MCF 10A (cell line): ENCODE measurements at regions of chr7 and their contacts with region 1.

Region 1: DNA sequence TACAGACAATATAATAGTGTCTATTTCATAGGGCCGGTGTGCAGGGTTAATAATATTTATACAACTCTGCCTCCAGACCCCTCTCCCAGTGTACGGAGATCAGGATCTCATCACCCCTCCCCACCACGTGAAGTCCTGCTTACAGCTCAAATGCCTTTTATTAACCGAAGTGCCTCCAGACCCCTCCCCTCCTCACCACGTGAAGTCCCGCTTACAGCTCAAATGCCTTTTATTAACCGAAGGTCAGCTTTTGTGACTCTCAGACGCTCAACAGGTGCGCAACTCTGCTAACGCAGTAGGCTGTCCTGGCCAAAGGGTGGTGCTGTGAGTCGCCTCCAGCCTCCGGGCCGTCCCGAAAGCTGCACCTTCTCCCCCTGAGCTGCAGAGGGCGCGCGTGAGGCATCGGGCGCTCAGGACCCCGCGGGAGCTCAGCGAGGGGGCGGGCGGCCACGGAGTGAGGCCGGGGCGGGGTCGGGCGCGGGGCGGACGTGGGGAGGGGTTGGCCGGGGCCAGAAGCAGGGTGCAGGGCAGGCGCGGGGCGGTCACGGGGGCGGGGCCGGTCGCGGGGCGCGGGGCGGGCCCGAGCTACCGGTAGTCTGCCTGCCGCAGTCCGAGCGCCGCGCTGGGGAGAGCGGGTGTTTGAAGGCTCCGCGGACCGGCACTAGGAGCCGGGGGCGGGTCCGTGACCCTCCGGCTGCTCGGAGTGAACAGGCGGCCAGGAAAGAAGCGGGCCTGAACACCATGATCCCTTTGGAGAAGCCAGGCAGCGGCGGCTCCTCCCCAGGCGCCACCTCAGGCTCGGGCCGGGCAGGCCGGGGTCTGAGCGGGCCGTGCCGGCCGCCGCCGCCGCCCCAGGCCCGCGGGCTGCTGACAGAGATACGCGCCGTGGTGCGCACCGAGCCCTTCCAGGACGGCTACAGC is at the start of gene STK17A:
- DNase-seq: peak; percentile 94
- H3K4me3 Mint-ChIP-seq: peak within 1 kb of the TSS; percentile 93
- H3K27ac Mint-ChIP-seq: peak within 1 kb of the TSS; percentile 95
- H3K4me1 Mint-ChIP-seq: peaks cover 16% of the 10 kb centered on the region
- H3K27me3 Mint-ChIP-seq: no peaks in the 10 kb centered on the region
- CTCF ChIP-seq: peak; percentile 97
- total RNA-seq, gene STK17A: 27.2 and 51.6 TPM in 2 replicates

Region 2: DNA sequence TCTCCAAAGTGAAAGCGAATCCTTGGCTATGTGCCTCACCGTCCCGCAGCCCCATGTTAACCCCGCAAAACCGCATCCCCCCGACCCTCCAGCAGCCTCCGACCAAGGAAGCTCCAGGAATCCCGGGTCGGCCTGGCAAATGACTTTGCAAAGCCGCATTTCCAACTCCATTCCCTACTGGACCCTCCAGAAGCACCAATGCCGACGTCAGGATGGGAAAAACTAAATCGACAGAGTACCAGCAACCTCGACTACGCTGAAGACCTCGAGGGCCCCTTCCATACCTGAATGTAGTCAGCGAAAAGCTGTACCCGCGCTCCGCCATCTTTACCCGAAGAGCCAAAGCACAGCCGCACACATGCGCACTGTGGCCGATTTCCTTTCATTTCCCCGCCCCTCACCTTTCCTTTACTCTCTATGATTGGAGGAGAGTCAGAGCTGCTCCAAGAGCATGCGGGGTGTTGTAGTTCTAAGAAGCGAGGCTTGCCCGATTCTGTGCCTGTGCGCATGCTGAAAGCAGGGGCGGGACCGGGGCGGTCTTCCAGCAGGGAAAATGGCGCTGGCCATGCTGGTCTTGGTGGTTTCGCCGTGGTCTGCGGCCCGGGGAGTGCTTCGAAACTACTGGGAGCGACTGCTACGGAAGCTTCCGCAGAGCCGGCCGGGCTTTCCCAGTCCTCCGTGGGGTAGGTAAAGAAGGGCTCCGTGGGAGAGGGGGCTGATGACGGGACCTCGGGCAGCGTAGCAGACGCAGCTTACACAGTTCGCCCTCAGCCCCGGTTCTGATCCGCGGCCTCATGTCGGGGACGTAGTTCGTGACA is 650.7 kb before region 1 on chr7 and contains the starts of genes MRPL32 and PSMA2:
- CTCF ChIA-PET with region 1: interaction called, 4 read pairs
- POLR2A ChIA-PET with region 1: interaction called, 17 read pairs
- intact Hi-C with region 1: no loop called
- DNase-seq: peak; percentile 98
- H3K4me3 Mint-ChIP-seq: peak within 1 kb of the TSS; percentile 100
- H3K27ac Mint-ChIP-seq: peak within 1 kb of the TSS; percentile 99
- H3K4me1 Mint-ChIP-seq: peaks cover 26% of the 10 kb centered on the region
- H3K27me3 Mint-ChIP-seq: no peaks in the 10 kb centered on the region
- CTCF ChIP-seq: no peak
- total RNA-seq, gene MRPL32: 69.8 and 82.0 TPM in 2 replicates
- total RNA-seq, gene PSMA2: 65.5 and 73.8 TPM in 2 replicates

Region 3: GRCh38 chr7:43516581-43517342 is 66.0 kb before region 1 on chr7:
- CTCF ChIA-PET with region 1: interaction called, 11 read pairs
- POLR2A ChIA-PET with region 1: interaction called, 12 read pairs
- intact Hi-C with region 1: no loop called
- DNase-seq: peak; percentile 74
- H3K4me3 Mint-ChIP-seq: no peak overlapping the region
- H3K27ac Mint-ChIP-seq: no peak overlapping the region
- H3K4me1 Mint-ChIP-seq: peaks cover 5% of the 10 kb centered on the region
- H3K27me3 Mint-ChIP-seq: no peaks in the 10 kb centered on the region
- CTCF ChIP-seq: no peak

Region 4: DNA sequence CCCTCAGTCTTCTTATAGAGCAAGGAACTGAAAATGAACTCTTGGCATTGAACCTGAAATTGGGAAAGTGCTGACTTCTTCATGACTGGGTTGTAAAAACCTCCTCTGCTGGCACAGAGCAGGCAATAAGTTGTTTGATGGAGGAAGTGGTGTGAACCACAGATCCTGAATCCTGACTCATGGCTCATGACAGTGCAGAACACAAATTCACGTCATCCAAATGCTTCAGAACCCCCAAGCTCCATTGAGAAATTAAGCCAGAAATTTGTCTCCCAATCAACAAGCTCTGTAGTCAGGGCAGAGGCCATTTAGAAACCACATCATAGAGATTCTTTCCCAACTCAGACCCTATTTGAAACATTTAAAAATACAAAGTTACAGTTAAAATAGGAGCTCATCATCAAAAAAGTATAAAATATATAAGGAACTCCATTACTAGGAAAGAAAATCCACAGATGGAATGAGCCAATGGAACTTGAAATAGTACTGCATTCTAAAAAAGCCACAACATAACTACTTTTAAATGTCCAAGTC is 10.2 kb before region 1 on chr7:
- CTCF ChIA-PET with region 1: interaction called, 60 read pairs
- POLR2A ChIA-PET with region 1: interaction called, 176 read pairs
- intact Hi-C with region 1: no loop called
- DNase-seq: peak; percentile 99
- H3K4me3 Mint-ChIP-seq: no peak overlapping the region
- H3K27ac Mint-ChIP-seq: peak overlapping the region; percentile 58
- H3K4me1 Mint-ChIP-seq: peaks cover 35% of the 10 kb centered on the region
- H3K27me3 Mint-ChIP-seq: no peaks in the 10 kb centered on the region
- CTCF ChIP-seq: no peak

Region 5: GRCh38 chr7:43647673-43648472 is 65.1 kb after region 1 on chr7:
- CTCF ChIA-PET with region 1: interaction called, 27 read pairs
- POLR2A ChIA-PET with region 1: interaction called, 107 read pairs
- intact Hi-C with region 1: loop called (anchors 1 kb)
- DNase-seq: peak; percentile 98
- H3K4me3 Mint-ChIP-seq: peak overlapping the region; percentile 38
- H3K27ac Mint-ChIP-seq: peak overlapping the region; percentile 89
- H3K4me1 Mint-ChIP-seq: peaks cover 54% of the 10 kb centered on the region
- H3K27me3 Mint-ChIP-seq: no peaks in the 10 kb centered on the region
- CTCF ChIP-seq: no peak

Region 6: GRCh38 chr7:43721193-43721806 is 138.5 kb after region 1 on chr7:
- CTCF ChIA-PET with region 1: interaction called, 67 read pairs
- POLR2A ChIA-PET with region 1: interaction called, 25 read pairs
- intact Hi-C with region 1: loop called (anchors 2 kb)
- DNase-seq: peak; percentile 70
- H3K4me3 Mint-ChIP-seq: no peak overlapping the region
- H3K27ac Mint-ChIP-seq: no peak overlapping the region
- H3K4me1 Mint-ChIP-seq: peaks cover 15% of the 10 kb centered on the region
- H3K27me3 Mint-ChIP-seq: no peaks in the 10 kb centered on the region
- CTCF ChIP-seq: peak; percentile 49

Region 7: GRCh38 chr7:43764039-43764761 is 181.4 kb after region 1 on chr7:
- CTCF ChIA-PET with region 1: interaction called, 8 read pairs
- POLR2A ChIA-PET with region 1: interaction called, 19 read pairs
- intact Hi-C with region 1: no loop called
- DNase-seq: peak; percentile 77
- H3K4me3 Mint-ChIP-seq: peak overlapping the region; percentile 62
- H3K27ac Mint-ChIP-seq: peak overlapping the region; percentile 81
- H3K4me1 Mint-ChIP-seq: peaks cover 36% of the 10 kb centered on the region
- H3K27me3 Mint-ChIP-seq: no peaks in the 10 kb centered on the region
- CTCF ChIP-seq: no peak